B cell (primary cell): ENCODE measurements at regions of chr5 and their contacts with region 1.

Region 1: GRCh38 chr5:126600631-126601511 is at the start of gene PHAX:
- DNase-seq: peak; percentile 86
- ATAC-seq: peak; percentile 93
- H3K4me3 ChIP-seq: peak within 1 kb of the TSS; percentile 69 to 93 (median 86)
- H3K4me3 Mint-ChIP-seq: peak within 1 kb of the TSS; percentile 99
- H3K27ac ChIP-seq: peak within 1 kb of the TSS; percentile 50 to 71
- H3K27ac Mint-ChIP-seq: peak within 1 kb of the TSS; percentile 97
- H3K4me1 ChIP-seq: peaks cover 16 to 17% of the 10 kb centered on the region in 2 donors
- H3K4me1 Mint-ChIP-seq: peaks cover 29% of the 10 kb centered on the region
- H3K27me3 ChIP-seq: no peaks in the 10 kb centered on the region
- H3K27me3 Mint-ChIP-seq: no peaks in the 10 kb centered on the region
- CTCF ChIP-seq: peak; percentile 80
- total RNA-seq, gene PHAX: 42.7 and 43.9 TPM in 2 replicates

Region 2: DNA sequence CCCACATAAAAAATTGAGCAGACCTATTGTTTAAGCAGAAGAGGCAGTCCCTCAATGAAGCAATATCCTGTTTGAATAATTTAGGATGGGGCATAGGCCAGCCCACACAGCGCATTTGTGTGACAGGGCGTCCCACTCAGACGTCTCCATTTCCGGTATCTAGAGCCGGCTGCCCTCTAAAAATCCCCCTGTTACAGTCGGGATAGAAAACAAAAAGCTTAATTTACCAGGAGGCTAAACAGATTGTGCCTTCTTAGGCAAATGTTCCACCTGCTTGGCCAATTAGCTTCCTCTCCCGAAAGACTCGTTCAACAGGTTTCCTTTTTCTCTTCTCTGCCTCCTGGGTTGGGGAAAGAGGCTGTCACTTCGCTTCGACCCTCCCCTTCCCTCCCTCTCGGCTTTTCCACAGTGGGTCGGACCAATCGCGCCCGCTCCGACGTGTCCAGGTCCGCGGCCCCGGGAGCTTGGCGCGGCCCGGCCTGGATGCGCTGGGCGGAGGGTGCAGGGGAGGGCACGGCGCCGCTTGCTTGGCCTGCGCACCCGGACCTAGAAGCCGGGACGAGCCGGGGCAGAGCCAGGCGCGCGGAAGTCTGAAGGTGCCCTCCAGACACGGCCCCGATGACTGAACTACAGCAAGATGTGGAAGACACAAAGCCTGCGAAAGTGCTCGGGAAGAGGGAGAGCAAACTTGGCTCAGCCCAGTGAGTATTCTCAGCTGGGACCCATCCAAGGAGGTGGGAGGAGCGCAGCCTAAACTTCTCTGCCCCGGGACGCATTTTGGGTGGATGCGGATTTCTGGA is 177.7 kb before region 1 on chr5 and contains the start of gene GRAMD2B:
- CTCF ChIA-PET with region 1: no interaction called
- POLR2A ChIA-PET with region 1: no interaction called
- intact Hi-C with region 1: loop called (anchors 2 kb)
- DNase-seq: peak; percentile 70
- ATAC-seq: peak; percentile 76
- H3K4me3 ChIP-seq: peak within 1 kb of the TSS; percentile 60 to 90 (median 78)
- H3K4me3 Mint-ChIP-seq: peak within 1 kb of the TSS; percentile 90
- H3K27ac ChIP-seq: peak within 1 kb of the TSS; percentile 37 to 75
- H3K27ac Mint-ChIP-seq: peak within 1 kb of the TSS; percentile 76
- H3K4me1 ChIP-seq: peaks cover 7 to 8% of the 10 kb centered on the region in 2 donors
- H3K4me1 Mint-ChIP-seq: peaks cover 23% of the 10 kb centered on the region
- H3K27me3 ChIP-seq: no peaks in the 10 kb centered on the region
- H3K27me3 Mint-ChIP-seq: no peaks in the 10 kb centered on the region
- CTCF ChIP-seq: no peak
- total RNA-seq, gene GRAMD2B: 2.7 and 3.6 TPM in 2 replicates

Region 3: GRCh38 chr5:126499853-126500342 is 101.0 kb before region 1 on chr5:
- CTCF ChIA-PET with region 1: no interaction called
- POLR2A ChIA-PET with region 1: no interaction called
- intact Hi-C with region 1: no loop called
- DNase-seq: peak; percentile 32
- ATAC-seq: no peak
- H3K4me3 ChIP-seq: no peak overlapping the region
- H3K4me3 Mint-ChIP-seq: no peak overlapping the region
- H3K27ac ChIP-seq: no peak overlapping the region
- H3K27ac Mint-ChIP-seq: no peak overlapping the region
- H3K4me1 ChIP-seq: no peaks in the 10 kb centered on the region
- H3K4me1 Mint-ChIP-seq: no peaks in the 10 kb centered on the region
- H3K27me3 ChIP-seq: no peaks in the 10 kb centered on the region
- H3K27me3 Mint-ChIP-seq: peaks cover 3% of the 10 kb centered on the region
- CTCF ChIP-seq: peak; percentile 41

Region 4: GRCh38 chr5:126801992-126802294 is 201.1 kb after region 1 on chr5:
- CTCF ChIA-PET with region 1: interaction called, 3 read pairs
- POLR2A ChIA-PET with region 1: no interaction called
- intact Hi-C with region 1: loop called (anchors 1 kb)
- DNase-seq: peak; percentile 48
- ATAC-seq: no peak
- H3K4me3 ChIP-seq: no peak overlapping the region
- H3K4me3 Mint-ChIP-seq: no peak overlapping the region
- H3K27ac ChIP-seq: no peak overlapping the region
- H3K27ac Mint-ChIP-seq: no peak overlapping the region
- H3K4me1 ChIP-seq: peaks cover 0 to 3% of the 10 kb centered on the region in 2 donors
- H3K4me1 Mint-ChIP-seq: peaks cover 34% of the 10 kb centered on the region
- H3K27me3 ChIP-seq: no peaks in the 10 kb centered on the region
- H3K27me3 Mint-ChIP-seq: no peaks in the 10 kb centered on the region
- CTCF ChIP-seq: peak; percentile 69

Region 5: DNA sequence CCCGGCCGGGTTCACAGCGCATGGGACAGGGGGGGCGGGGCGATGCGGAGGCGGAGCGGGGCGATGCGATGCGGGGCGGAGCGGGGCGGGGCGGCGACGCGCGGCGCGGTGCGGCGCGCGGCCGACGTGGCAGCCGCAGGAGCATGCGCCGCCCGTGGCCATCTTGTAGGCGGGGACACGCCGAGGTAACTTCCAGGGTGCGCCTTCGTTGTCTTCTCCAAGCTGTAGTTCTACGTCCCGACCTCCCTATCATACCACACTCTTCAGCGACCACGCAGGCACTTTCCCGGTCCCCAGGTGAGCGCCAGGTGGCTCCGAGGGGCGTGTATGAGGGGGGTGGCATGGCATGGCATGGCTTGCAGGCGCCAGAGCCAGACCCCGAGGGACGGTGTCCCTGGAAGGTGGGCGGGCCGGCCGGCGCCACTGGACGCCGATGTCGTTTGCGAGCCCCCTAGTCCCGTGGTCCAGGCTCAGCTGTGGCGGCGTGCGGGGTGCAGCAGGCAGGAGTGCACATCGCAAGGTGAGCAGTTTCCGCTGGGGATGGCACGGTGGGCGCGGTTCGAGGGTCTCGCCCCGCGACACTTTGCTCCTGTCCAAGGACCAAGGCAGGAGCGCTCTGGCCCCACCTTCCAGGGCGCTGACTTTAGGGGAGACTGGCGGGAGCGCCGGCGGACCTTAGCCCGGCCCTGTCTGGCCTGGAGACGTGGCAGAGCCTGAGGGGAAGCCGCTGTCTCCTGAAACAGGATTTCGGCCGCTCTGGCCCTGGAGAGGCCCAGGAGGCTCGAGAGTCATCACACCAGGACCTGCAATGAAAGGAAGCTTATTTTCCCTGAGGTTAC is 916.8 kb after region 1 on chr5 and contains the start of gene PRRC1:
- CTCF ChIA-PET with region 1: no interaction called
- POLR2A ChIA-PET with region 1: no interaction called
- intact Hi-C with region 1: loop called (anchors 1 kb)
- DNase-seq: peak; percentile 86
- ATAC-seq: peak; percentile 96
- H3K4me3 ChIP-seq: peak within 1 kb of the TSS; percentile 85 to 99 (median 98)
- H3K4me3 Mint-ChIP-seq: peak within 1 kb of the TSS; percentile 93
- H3K27ac ChIP-seq: peak within 1 kb of the TSS; percentile 67 to 85
- H3K27ac Mint-ChIP-seq: peak within 1 kb of the TSS; percentile 79
- H3K4me1 ChIP-seq: peaks cover 12% of the 10 kb centered on the region in 2 donors
- H3K4me1 Mint-ChIP-seq: peaks cover 26% of the 10 kb centered on the region
- H3K27me3 ChIP-seq: no peaks in the 10 kb centered on the region
- H3K27me3 Mint-ChIP-seq: peaks cover 4% of the 10 kb centered on the region
- CTCF ChIP-seq: no peak
- total RNA-seq, gene PRRC1: 33.7 and 35.5 TPM in 2 replicates